ENCODE measurements at regions of chr1 and their contacts with region 1.

Region 1: DNA sequence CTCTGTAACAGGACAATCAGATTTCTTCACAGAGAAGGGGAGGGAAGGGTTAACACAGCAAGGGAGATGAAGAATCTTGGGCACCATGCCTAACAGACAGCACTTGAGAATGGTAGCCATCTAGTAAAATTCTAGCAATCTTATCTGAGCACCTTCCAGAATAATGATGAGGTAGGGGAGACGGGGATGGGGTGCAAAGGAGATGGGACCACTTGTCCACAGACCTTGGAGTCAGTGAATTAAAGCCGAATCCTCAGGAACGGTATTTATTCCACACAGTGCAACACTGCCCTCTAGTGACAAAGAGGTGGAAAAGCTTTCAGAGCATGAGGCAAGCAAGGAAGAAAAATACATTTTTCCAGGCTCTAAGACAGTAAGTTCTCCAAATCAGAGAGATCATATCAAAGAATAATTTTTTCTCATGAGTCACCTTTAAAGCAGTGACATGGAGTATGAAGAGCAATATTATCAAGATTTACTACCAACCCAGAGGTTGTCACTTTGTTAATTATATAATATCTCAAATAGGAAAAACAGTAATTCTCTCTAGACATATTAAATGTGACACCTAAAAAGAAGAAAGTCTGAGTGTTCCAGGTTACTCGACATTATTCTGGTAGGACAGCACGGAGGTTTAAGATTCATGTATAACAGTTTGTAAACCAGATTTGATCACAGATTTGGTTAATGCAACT is 43.3 kb upstream of the LPAR3 start:
- DNase-seq: peak; percentile 78
- H3K4me3 Mint-ChIP-seq: no peak overlapping the region
- H3K27ac Mint-ChIP-seq: no peak overlapping the region
- H3K4me1 Mint-ChIP-seq: no peaks in the 10 kb centered on the region
- H3K27me3 Mint-ChIP-seq: no peaks in the 10 kb centered on the region
- CTCF ChIP-seq: peak; percentile 89

Region 2: GRCh38 chr1:84143796-84144565 is 792.3 kb before region 1 on chr1 and contains the start of gene PRKACB:
- CTCF ChIA-PET with region 1: no interaction called
- POLR2A ChIA-PET with region 1: no interaction called
- intact Hi-C with region 1: loop called (anchors 2 kb)
- DNase-seq: peak; percentile 9
- H3K4me3 Mint-ChIP-seq: no peak within 1 kb of the TSS
- H3K27ac Mint-ChIP-seq: no peak within 1 kb of the TSS
- H3K4me1 Mint-ChIP-seq: no peaks in the 10 kb centered on the region
- H3K27me3 Mint-ChIP-seq: no peaks in the 10 kb centered on the region
- CTCF ChIP-seq: no peak
- total RNA-seq, gene PRKACB: 12.8 and 14.8 TPM in 2 replicates

Region 3: GRCh38 chr1:84442256-84442655 is 494.0 kb before region 1 on chr1:
- CTCF ChIA-PET with region 1: interaction called, 15 read pairs
- POLR2A ChIA-PET with region 1: no interaction called
- intact Hi-C with region 1: loop called (anchors 1 kb)
- DNase-seq: peak; percentile 87
- H3K4me3 Mint-ChIP-seq: no peak overlapping the region
- H3K27ac Mint-ChIP-seq: no peak overlapping the region
- H3K4me1 Mint-ChIP-seq: no peaks in the 10 kb centered on the region
- H3K27me3 Mint-ChIP-seq: no peaks in the 10 kb centered on the region
- CTCF ChIP-seq: peak; percentile 39

Region 4: GRCh38 chr1:84653130-84653677 is 283.1 kb before region 1 on chr1:
- CTCF ChIA-PET with region 1: no interaction called
- POLR2A ChIA-PET with region 1: no interaction called
- intact Hi-C with region 1: loop called (anchors 1 kb)
- DNase-seq: no peak
- H3K4me3 Mint-ChIP-seq: no peak overlapping the region
- H3K27ac Mint-ChIP-seq: no peak overlapping the region
- H3K4me1 Mint-ChIP-seq: no peaks in the 10 kb centered on the region
- H3K27me3 Mint-ChIP-seq: no peaks in the 10 kb centered on the region
- CTCF ChIP-seq: no peak

Region 5: GRCh38 chr1:84675105-84675504 is 261.2 kb before region 1 on chr1:
- CTCF ChIA-PET with region 1: no interaction called
- POLR2A ChIA-PET with region 1: no interaction called
- intact Hi-C with region 1: no loop called
- DNase-seq: no peak
- H3K4me3 Mint-ChIP-seq: no peak overlapping the region
- H3K27ac Mint-ChIP-seq: no peak overlapping the region
- H3K4me1 Mint-ChIP-seq: no peaks in the 10 kb centered on the region
- H3K27me3 Mint-ChIP-seq: no peaks in the 10 kb centered on the region
- CTCF ChIP-seq: no peak

Region 6: DNA sequence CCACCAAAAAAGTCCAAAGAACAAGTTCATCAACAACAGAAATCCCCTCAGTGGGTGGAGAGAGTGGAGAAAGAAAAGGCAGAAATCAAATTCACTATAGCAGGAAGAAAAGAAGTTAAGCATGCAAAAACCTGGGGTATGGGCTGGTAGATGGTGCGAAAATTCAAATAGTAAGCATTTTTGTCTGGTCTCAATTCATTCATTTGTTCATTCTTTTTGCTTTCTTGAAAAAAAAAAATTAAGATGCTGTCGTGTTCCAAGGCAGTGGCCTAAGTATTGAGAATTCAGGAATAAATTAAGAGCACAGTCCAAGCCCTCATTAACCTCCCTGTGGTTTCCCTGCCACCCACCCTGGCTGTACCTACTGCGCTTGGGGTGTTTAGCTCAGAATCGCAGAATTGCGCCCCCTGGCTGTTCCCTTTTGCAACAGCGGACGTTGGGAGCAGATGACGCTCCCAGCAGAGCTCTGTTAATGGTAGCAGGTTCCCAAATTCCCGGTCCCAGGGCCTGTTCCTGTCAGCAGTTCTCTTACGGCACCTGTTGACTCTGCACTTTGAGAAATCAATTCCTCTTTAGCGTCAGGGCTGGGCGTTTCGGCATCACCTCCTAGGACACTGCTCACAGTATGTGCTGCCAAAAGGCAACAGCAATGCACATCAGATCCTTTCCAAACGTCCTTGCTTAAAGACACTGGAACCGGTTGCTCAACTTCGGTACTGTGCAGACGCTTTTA is 212.0 kb before region 1 on chr1:
- CTCF ChIA-PET with region 1: no interaction called
- POLR2A ChIA-PET with region 1: no interaction called
- intact Hi-C with region 1: no loop called
- DNase-seq: peak; percentile 13
- H3K4me3 Mint-ChIP-seq: no peak overlapping the region
- H3K27ac Mint-ChIP-seq: no peak overlapping the region
- H3K4me1 Mint-ChIP-seq: peaks cover 20% of the 10 kb centered on the region
- H3K27me3 Mint-ChIP-seq: no peaks in the 10 kb centered on the region
- CTCF ChIP-seq: peak; percentile 25

Region 7: GRCh38 chr1:84758968-84759491 is 177.2 kb before region 1 on chr1:
- CTCF ChIA-PET with region 1: interaction called, 31 read pairs
- POLR2A ChIA-PET with region 1: no interaction called
- intact Hi-C with region 1: loop called (anchors 2 kb)
- DNase-seq: peak; percentile 14
- H3K4me3 Mint-ChIP-seq: no peak overlapping the region
- H3K27ac Mint-ChIP-seq: no peak overlapping the region
- H3K4me1 Mint-ChIP-seq: peaks cover 6% of the 10 kb centered on the region
- H3K27me3 Mint-ChIP-seq: no peaks in the 10 kb centered on the region
- CTCF ChIP-seq: no peak

Region 8: DNA sequence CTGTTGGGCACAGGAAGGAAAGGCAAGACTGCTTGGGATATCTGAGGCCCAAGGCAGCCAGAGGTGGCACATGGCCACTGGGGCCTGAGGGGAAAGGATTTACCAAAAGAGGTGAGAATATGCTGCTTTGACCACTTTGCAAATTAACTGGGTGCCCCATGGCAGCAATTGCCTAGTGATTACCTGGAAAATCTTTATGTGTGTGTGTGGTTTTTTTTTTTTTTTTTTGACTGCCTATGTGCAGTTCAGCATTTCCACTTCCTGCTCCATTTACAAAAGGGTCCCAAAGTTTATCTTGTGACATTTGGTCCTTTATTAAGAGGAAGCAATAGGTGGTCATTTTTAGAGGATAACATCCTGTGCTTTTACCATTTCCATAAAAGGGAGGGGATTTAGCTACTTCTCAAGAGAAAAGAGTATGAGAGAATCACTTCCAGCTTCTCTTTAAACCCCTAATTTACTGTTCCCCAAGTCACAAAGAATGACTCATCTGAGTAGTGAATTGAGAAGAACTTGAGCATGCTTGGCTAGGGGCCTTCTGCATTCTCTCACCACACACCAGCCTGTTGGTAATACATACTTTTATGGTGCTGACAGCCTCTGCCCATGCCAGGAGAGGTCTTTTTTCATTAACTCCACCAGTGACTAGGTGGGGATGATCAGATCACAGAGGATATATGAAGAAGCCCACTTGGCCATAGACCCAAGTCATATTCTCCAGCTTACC is 212.4 kb after region 1 on chr1:
- CTCF ChIA-PET with region 1: no interaction called
- POLR2A ChIA-PET with region 1: no interaction called
- intact Hi-C with region 1: no loop called
- DNase-seq: peak; percentile 2
- H3K4me3 Mint-ChIP-seq: no peak overlapping the region
- H3K27ac Mint-ChIP-seq: no peak overlapping the region
- H3K4me1 Mint-ChIP-seq: no peaks in the 10 kb centered on the region
- H3K27me3 Mint-ChIP-seq: no peaks in the 10 kb centered on the region
- CTCF ChIP-seq: no peak

Measured in MCF 10A (cell line).